ENCODE measurements at regions of chr17 and their contacts with region 1.

Region 1: DNA sequence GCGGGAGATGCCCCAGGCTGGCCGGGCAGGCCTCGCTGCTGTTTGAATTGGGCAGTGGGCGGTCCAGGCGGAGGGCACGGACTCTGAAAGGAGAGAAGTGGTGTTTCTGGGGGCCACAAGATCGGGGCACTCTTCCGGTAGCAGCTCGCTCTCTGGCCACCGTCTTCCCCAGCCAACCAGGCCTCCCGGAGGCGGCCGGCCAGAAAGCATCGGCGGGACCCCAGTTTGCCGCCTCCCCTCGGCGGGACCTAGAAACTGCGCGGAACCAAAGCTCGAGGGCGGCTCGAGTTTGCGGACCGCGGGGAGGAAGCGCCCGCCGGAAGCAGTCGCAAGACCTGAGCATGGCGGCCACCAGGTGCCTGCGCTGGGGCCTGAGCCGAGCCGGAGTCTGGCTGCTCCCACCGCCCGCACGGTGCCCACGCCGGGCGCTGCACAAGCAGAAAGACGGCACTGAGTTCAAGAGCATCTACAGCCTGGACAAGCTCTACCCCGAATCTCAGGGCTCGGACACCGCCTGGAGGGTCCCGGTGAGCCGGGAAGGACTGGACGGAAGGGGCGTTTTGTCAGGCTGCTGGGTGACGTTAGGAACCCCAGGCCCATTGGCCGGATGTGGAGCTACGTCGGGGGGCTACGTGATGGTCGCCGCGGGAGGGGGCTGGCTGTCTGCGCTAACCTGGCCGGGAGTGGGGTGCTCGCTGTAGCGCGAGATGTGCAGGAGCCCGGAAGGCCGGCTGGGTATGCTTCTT is at the start of gene MRPL58:
- DNase-seq: peak; percentile 80 to 93
- H3K4me3 ChIP-seq: peak within 1 kb of the TSS; percentile 73 to 84 (median 79)
- H3K27ac ChIP-seq: peak within 1 kb of the TSS; percentile 87
- H3K4me1 ChIP-seq: peaks cover 0 to 15% (median 4%) of the 10 kb centered on the region in 4 experiments; a peak in 5 of 7 replicates
- H3K27me3 ChIP-seq: no peaks in the 10 kb centered on the region
- CTCF ChIP-seq: peak in 2 of 3 experiments; percentile 36 to 38; a peak in 3 of 4 replicates
- EP300 ChIP-seq: peak in 1 of 2 experiments; percentile 60; a peak in 1 of 3 replicates
- POLR2A ChIP-seq: peak; percentile 84 to 96
- RAD21 ChIP-seq: peak in 1 of 2 experiments; percentile 38; a peak in 3 of 4 replicates
- total RNA-seq, gene MRPL58: 48.5 and 49.1 TPM in 2 replicates

Region 2: GRCh38 chr17:74972107-74972972 is 40.2 kb before region 1 on chr17 and contains the start of gene HID1:
- CTCF ChIA-PET with region 1: interaction called, 345 read pairs
- POLR2A ChIA-PET with region 1: interaction called, 48 read pairs
- DNase-seq: peak in 1 of 2 experiments; percentile 91
- H3K4me3 ChIP-seq: peak within 1 kb of the TSS; percentile 62 to 92 (median 62)
- H3K27ac ChIP-seq: no peak within 1 kb of the TSS
- H3K4me1 ChIP-seq: peaks cover 0 to 15% (median 9%) of the 10 kb centered on the region in 4 experiments; a peak in 6 of 7 replicates
- H3K27me3 ChIP-seq: peaks cover 17 to 43% (median 37%) of the 10 kb centered on the region in 4 experiments
- CTCF ChIP-seq: no peak
- EP300 ChIP-seq: no peak
- POLR2A ChIP-seq: no peak
- RAD21 ChIP-seq: no peak
- total RNA-seq, gene HID1: 13.8 and 15.1 TPM in 2 replicates

Region 3: GRCh38 chr17:74987418-74987908 is 25.1 kb before region 1 on chr17 and contains the start of gene CDR2L:
- CTCF ChIA-PET with region 1: interaction called, 74 read pairs
- POLR2A ChIA-PET with region 1: interaction called, 87 read pairs
- DNase-seq: peak; percentile 79 to 97
- H3K4me3 ChIP-seq: peak within 1 kb of the TSS; percentile 82 to 93 (median 84)
- H3K27ac ChIP-seq: peak within 1 kb of the TSS; percentile 62
- H3K4me1 ChIP-seq: peaks cover 0 to 7% (median 6%) of the 10 kb centered on the region in 4 experiments; a peak in 6 of 7 replicates
- H3K27me3 ChIP-seq: no peaks in the 10 kb centered on the region
- CTCF ChIP-seq: no peak
- EP300 ChIP-seq: peak in 1 of 2 experiments; percentile 55; a peak in 1 of 3 replicates
- POLR2A ChIP-seq: peak; percentile 69 to 87
- RAD21 ChIP-seq: no peak
- total RNA-seq, gene CDR2L: 38.1 and 40.5 TPM in 2 replicates

Region 4: GRCh38 chr17:75001915-75002843 is 10.3 kb before region 1 on chr17:
- CTCF ChIA-PET with region 1: interaction called, 41 read pairs
- POLR2A ChIA-PET with region 1: interaction called, 27 read pairs
- DNase-seq: no peak
- H3K4me3 ChIP-seq: no peak overlapping the region
- H3K27ac ChIP-seq: no peak overlapping the region
- H3K4me1 ChIP-seq: no peaks in the 10 kb centered on the region
- H3K27me3 ChIP-seq: no peaks in the 10 kb centered on the region
- CTCF ChIP-seq: no peak
- EP300 ChIP-seq: no peak
- POLR2A ChIP-seq: no peak
- RAD21 ChIP-seq: no peak

Region 5: GRCh38 chr17:75034236-75034908 is 21.9 kb after region 1 on chr17:
- CTCF ChIA-PET with region 1: interaction called, 10 read pairs
- POLR2A ChIA-PET with region 1: interaction called, 63 read pairs
- DNase-seq: peak; percentile 87 to 97
- H3K4me3 ChIP-seq: peak overlapping the region; percentile 82 to 98 (median 95)
- H3K27ac ChIP-seq: peak overlapping the region; percentile 89
- H3K4me1 ChIP-seq: peaks cover 3 to 10% (median 7%) of the 10 kb centered on the region in 4 experiments; a peak in 5 of 7 replicates
- H3K27me3 ChIP-seq: no peaks in the 10 kb centered on the region
- CTCF ChIP-seq: peak in 1 of 3 experiments; percentile 5; a peak in 1 of 4 replicates
- EP300 ChIP-seq: no peak
- POLR2A ChIP-seq: peak; percentile 41 to 43; a peak in 2 of 3 replicates
- RAD21 ChIP-seq: no peak